Naive thymus-derived CD4-positive, alpha-beta T cell (primary cell): ENCODE measurements at regions of chr1 and their contacts with region 1.

Region 1: GRCh38 chr1:198157241-198157846 is 546 bp downstream of the NEK7 start:
- DNase-seq: peak; percentile 63 to 81 (median 79)
- ATAC-seq: peak; percentile 65
- H3K4me3 ChIP-seq: peak overlapping the region; percentile 99
- H3K4me3 Mint-ChIP-seq: peak overlapping the region; percentile 97 to 100 (median 100)
- H3K27ac ChIP-seq: peak overlapping the region; percentile 96
- H3K27ac Mint-ChIP-seq: peak overlapping the region; percentile 97 to 100 (median 99)
- H3K4me1 ChIP-seq: peaks cover 28 to 33% of the 10 kb centered on the region in 2 donors
- H3K4me1 Mint-ChIP-seq: peaks cover 26 to 53% (median 48%) of the 10 kb centered on the region in 7 donors
- H3K27me3 ChIP-seq: no peaks in the 10 kb centered on the region
- H3K27me3 Mint-ChIP-seq: no peaks in the 10 kb centered on the region

Region 2: DNA sequence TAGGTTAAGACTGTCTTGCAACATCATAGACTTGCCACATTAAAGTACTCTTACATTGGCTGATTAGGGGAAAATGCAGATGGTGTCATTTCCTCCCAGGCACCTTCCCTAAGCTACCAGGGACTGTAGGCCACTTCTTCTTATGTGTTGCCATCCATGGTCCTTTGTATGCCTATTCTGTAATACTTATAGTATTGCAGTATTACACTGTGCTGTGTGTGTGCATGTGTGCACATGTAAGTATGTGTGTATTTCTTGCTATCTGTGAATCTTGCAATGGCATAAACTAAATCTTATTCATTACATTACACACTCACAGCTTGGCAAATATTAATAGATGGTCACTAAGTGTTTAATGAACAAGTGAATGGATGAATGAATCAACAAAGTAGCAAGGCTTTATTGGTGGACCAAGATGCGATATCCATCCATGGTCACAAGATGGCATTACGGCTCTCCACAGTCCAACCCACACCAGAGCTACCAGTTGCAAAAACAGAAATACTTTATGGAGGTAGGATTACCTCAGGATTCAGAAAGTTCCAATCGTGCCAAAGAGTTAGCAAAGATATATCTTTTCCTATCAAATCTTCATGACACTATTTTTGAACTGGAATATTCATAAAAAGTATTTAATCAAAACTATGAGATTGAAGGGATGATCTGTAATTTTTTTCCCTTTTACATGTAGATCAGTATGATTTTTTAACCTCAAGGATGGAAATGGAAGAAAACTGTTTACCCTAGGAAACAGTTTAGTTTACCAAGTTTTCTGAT is 542.2 kb before region 1 on chr1:
- CTCF ChIA-PET with region 1: no interaction called
- POLR2A ChIA-PET with region 1: no interaction called
- intact Hi-C with region 1: loop called in 1 of 2 experiments (anchors 1 kb)
- DNase-seq: peak in 5 of 9 donors; percentile 0 to 27 (median 8)
- ATAC-seq: peak; percentile 55
- H3K4me3 ChIP-seq: no peak overlapping the region
- H3K4me3 Mint-ChIP-seq: no peak overlapping the region
- H3K27ac ChIP-seq: no peak overlapping the region
- H3K27ac Mint-ChIP-seq: peak overlapping the region in 1 of 9 donors; percentile 65
- H3K4me1 ChIP-seq: no peaks in the 10 kb centered on the region
- H3K4me1 Mint-ChIP-seq: peaks cover 0 to 4% (median 0%) of the 10 kb centered on the region in 7 donors
- H3K27me3 ChIP-seq: no peaks in the 10 kb centered on the region
- H3K27me3 Mint-ChIP-seq: no peaks in the 10 kb centered on the region

Region 3: DNA sequence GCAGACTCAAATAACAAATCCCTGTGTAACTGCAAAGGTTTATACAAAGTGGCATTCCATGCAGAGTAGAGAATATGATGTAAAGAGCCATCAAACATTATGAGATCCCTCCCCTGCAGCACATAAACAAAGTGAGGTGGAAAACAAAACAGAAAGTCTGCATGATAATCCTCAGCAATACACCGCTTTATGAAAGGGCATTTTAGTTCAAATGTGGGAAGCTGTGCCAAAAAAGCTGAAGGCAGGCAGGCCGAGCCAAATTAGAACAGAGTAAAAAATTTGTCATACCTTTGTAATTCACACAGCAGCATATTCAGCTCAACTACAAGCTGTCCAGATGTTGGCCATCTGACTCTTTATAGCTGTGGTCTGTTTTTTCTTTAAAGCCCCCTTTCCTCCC is 126.7 kb before region 1 on chr1:
- CTCF ChIA-PET with region 1: no interaction called
- POLR2A ChIA-PET with region 1: no interaction called
- intact Hi-C with region 1: no loop called
- DNase-seq: no peak
- ATAC-seq: no peak
- H3K4me3 ChIP-seq: no peak overlapping the region
- H3K4me3 Mint-ChIP-seq: no peak overlapping the region
- H3K27ac ChIP-seq: no peak overlapping the region
- H3K27ac Mint-ChIP-seq: no peak overlapping the region
- H3K4me1 ChIP-seq: no peaks in the 10 kb centered on the region
- H3K4me1 Mint-ChIP-seq: peaks cover 0 to 5% (median 0%) of the 10 kb centered on the region in 7 donors
- H3K27me3 ChIP-seq: peaks cover 0 to 3% of the 10 kb centered on the region in 2 donors
- H3K27me3 Mint-ChIP-seq: peaks cover 7 to 31% (median 9%) of the 10 kb centered on the region in 5 donors

Region 4: DNA sequence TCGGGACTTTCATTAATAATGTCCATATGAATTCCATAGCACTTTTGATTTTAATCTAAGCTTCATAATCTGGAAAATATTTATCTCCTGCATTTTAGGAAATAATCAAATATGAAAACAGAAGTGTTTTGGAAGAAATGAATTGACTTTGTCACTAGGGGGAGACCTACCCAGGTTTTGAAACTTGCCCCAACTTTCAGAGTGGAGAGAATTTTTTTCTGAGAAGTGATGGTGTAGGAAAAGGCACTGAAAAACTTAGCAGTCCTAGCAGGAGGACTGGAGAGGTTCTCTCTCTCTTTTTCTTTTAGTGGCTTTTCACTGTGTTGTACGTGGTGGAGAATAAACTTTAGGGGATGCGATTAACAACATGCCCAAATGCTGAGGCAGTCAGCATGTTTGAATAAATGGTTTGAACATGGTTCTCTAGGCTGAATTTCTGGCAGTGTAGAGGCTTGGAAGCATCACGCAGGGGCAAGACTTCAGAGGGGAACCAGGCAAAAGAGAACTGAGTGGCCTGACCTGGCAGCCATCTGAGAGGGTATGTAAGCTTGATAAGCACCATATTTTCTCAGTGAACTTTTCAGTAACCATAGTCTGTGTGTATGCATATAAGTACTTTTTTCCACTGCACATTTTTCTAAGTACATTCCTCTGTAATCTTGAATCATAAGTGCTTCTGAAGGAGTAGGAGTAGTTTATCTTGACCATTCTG is 68.8 kb before region 1 on chr1:
- CTCF ChIA-PET with region 1: no interaction called
- POLR2A ChIA-PET with region 1: no interaction called
- intact Hi-C with region 1: loop called (anchors 1 kb)
- DNase-seq: peak in 6 of 9 donors; percentile 9 to 52 (median 37)
- ATAC-seq: peak; percentile 40
- H3K4me3 ChIP-seq: no peak overlapping the region
- H3K4me3 Mint-ChIP-seq: no peak overlapping the region
- H3K27ac ChIP-seq: no peak overlapping the region
- H3K27ac Mint-ChIP-seq: no peak overlapping the region
- H3K4me1 ChIP-seq: no peaks in the 10 kb centered on the region
- H3K4me1 Mint-ChIP-seq: peaks cover 0 to 7% (median 3%) of the 10 kb centered on the region in 7 donors
- H3K27me3 ChIP-seq: no peaks in the 10 kb centered on the region
- H3K27me3 Mint-ChIP-seq: peaks cover 0 to 8% (median 4%) of the 10 kb centered on the region in 5 donors

Region 5: DNA sequence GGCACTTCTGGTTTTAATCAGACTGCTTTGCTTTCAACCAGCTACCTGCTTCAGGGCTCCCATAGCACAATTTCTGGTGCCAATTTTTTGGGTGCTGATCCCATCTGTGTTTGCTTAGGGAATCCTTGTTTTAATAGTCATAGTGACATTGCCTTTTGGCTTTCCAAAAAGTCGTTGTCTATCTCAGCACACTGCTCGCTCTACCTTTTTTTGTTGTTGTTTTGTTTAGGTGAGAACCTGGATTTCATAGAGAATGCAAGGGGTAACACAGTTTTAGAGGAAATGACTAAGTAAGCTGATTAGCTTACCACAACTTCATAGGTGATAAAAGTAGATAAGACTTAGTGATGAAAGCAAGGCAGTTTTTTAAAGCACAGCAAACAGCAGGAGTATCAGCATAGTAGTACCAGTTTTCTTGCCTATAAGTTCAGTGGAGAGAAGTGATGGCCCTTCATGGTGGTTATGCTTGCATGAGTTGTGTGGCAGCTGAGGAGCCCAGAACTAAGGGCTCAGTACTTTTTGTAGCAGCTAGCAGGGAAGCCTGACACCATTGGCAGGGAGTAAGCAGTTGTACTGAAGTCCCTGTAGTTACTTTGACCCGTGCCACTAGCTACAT is 30.7 kb after region 1 on chr1:
- CTCF ChIA-PET with region 1: interaction called, 3 read pairs
- POLR2A ChIA-PET with region 1: interaction called, 10 read pairs
- intact Hi-C with region 1: loop called (anchors 1 kb)
- DNase-seq: peak in 6 of 9 donors; percentile 25 to 45 (median 32)
- ATAC-seq: peak; percentile 91
- H3K4me3 ChIP-seq: peak overlapping the region; percentile 2
- H3K4me3 Mint-ChIP-seq: peak overlapping the region; percentile 0 to 75 (median 54)
- H3K27ac ChIP-seq: peak overlapping the region; percentile 43
- H3K27ac Mint-ChIP-seq: peak overlapping the region; percentile 9 to 86 (median 74)
- H3K4me1 ChIP-seq: peaks cover 35 to 70% of the 10 kb centered on the region in 2 donors
- H3K4me1 Mint-ChIP-seq: peaks cover 39 to 91% (median 82%) of the 10 kb centered on the region in 7 donors
- H3K27me3 ChIP-seq: no peaks in the 10 kb centered on the region
- H3K27me3 Mint-ChIP-seq: no peaks in the 10 kb centered on the region

Region 6: GRCh38 chr1:198465201-198466144 is 308.1 kb after region 1 on chr1:
- CTCF ChIA-PET with region 1: no interaction called
- POLR2A ChIA-PET with region 1: no interaction called
- intact Hi-C with region 1: loop called (anchors 2 to 5 kb)
- DNase-seq: peak in 6 of 9 donors; percentile 3 to 57 (median 40)
- ATAC-seq: peak; percentile 71
- H3K4me3 ChIP-seq: no peak overlapping the region
- H3K4me3 Mint-ChIP-seq: no peak overlapping the region
- H3K27ac ChIP-seq: no peak overlapping the region
- H3K27ac Mint-ChIP-seq: no peak overlapping the region
- H3K4me1 ChIP-seq: no peaks in the 10 kb centered on the region
- H3K4me1 Mint-ChIP-seq: peaks cover 0 to 5% (median 0%) of the 10 kb centered on the region in 7 donors
- H3K27me3 ChIP-seq: no peaks in the 10 kb centered on the region
- H3K27me3 Mint-ChIP-seq: no peaks in the 10 kb centered on the region

Region 7: DNA sequence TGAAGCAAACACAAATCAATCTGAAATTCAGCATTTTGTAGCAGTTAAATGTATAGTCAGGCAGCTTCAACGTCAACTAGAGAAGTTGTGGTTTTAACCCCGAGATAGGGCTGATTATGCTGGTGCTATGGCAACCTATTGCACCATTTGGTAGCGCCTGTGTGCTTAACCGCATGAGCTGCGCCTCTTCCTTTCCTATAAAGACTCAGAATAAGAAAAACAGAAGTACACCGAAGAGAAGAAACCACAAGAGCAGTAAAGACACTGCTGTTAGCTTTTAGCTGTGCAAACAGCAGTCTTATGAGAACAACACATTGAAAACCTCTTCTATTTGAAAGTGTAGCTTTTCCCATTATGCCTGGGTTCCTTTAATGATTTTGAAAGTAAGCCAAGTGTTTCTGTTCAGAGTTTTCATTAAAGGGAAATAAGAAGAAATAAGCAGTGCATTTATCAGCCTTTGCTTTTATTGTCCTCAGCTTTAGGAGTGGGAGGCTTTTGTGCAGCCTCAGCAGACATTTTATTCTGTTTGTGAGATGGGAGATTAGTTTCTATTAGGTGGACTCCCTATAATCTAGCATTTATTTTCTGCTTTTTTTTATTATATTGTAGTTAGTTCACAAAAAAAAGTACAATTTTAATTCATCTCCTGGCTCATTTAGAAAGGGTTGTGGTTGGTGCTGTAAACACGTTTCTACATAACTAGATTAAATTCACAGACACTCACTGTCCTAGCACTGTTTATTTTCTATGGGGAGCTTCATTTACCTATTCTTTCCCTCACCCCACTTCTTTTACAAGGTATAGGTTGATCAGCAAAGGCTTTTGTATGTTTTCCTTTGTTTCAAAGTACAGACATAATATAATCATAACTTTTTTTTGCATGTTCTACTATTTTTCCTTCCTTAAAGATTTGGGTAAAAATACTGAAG is 524.8 kb after region 1 on chr1:
- CTCF ChIA-PET with region 1: no interaction called
- POLR2A ChIA-PET with region 1: interaction called, 6 read pairs
- intact Hi-C with region 1: loop called (anchors 2 kb)
- DNase-seq: peak; percentile 28 to 96 (median 92)
- ATAC-seq: peak; percentile 89
- H3K4me3 ChIP-seq: peak overlapping the region; percentile 51
- H3K4me3 Mint-ChIP-seq: peak overlapping the region; percentile 74 to 87 (median 77)
- H3K27ac ChIP-seq: peak overlapping the region; percentile 92
- H3K27ac Mint-ChIP-seq: peak overlapping the region; percentile 90 to 99 (median 98)
- H3K4me1 ChIP-seq: peaks cover 88 to 90% of the 10 kb centered on the region in 2 donors
- H3K4me1 Mint-ChIP-seq: peaks cover 53 to 94% (median 81%) of the 10 kb centered on the region in 7 donors
- H3K27me3 ChIP-seq: no peaks in the 10 kb centered on the region
- H3K27me3 Mint-ChIP-seq: peaks cover 0 to 2% (median 0%) of the 10 kb centered on the region in 5 donors